Posterior vena cava (tissue), 2 donors: ENCODE measurements at regions of chr21 and their contacts with region 1.

Region 1: GRCh38 chr21:31580866-31581276 is 78.6 kb upstream of the SOD1 start:
- DNase-seq: no peak

Region 2: GRCh38 chr21:29748391-29749167 is 1832.3 kb before region 1 on chr21:
- intact Hi-C with region 1: loop called in 1 of 2 experiments (anchors 5 kb)
- DNase-seq: no peak

Region 3: DNA sequence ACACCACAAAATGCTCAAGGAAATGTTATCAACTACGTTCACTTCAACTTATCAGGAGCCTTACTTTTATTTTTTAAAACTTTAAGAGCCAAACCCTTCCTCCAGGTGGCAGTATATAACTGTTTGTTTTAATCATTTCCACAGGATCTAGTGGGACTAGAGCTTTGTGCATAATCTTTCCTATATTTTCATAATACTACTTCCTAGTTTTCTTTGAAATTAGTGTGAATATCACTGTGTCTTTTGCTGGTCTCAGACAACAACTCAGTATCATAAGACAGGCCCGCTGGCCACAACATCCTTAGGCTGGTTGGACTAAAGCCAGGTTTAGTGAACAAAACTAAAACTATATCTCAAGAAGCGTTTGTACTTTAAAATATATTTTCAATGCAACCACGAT is 382.3 kb before region 1 on chr21:
- intact Hi-C with region 1: loop called (anchors 10 kb)
- DNase-seq: no peak

Region 4: DNA sequence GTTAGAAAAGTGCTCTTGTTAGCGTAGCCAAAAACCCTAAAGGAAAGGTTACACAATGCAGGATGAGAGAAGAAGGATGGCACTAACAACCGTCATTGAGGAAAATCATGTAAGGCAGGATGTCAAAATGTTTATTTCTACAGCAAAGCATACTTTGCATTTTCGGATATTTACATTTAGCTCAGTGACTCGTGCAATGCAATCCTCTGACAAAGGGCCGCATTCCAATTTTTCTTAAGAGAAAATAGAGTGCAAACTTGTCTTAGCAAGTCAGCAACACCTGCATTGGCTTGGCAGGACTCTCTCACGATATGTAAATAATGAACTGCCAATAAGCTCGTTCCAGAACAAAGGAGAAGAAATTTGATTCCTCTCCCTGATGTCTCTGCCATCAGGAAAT is 270.1 kb before region 1 on chr21:
- intact Hi-C with region 1: no loop called
- DNase-seq: no peak

Region 5: GRCh38 chr21:31343680-31344480 is 237.0 kb before region 1 on chr21 and contains the start of gene TIAM1:
- intact Hi-C with region 1: no loop called
- DNase-seq: peak; percentile 88
- total RNA-seq, gene TIAM1: 4.7 to 11.3 TPM

Region 6: DNA sequence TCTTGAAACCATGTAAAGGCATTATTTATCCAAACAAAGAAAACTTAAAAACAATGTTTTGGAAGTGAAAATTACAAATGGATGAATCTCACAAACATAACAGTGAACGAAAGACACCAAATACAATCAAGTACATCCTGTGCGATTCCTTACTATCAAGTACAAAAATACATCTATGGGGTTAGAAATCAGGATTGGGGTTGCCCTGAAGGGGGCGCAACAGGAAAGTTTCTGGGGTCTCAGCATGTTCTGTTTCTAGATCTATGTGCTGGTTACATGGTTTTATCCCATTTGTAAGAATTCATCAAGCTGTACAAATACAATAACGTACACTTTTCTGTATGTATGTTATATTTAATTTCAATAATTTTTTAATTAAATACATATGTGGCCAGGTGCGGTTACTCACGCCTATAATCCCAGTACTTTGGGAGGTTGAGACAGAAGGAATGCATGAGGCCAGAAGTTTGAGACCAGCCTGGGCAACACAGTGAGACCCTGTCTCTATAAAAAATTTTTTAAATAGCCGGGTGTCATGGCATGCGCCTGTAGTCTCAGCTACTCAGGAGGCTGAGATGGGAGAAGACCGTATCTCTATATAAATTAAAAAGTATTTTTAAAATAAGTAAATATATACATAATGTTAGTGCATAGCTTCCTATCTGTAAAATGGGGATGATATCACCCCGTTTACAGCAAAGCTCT is 42.8 kb before region 1 on chr21:
- intact Hi-C with region 1: loop called in 1 of 2 experiments (anchors 2 kb)
- DNase-seq: no peak